PC-3 (cell line): ENCODE measurements at regions of chr20 and their contacts with region 1.

Region 1: GRCh38 chr20:19815553-19815991 is 57.5 kb downstream of the RIN2 start:
- DNase-seq: peak; percentile 99
- ATAC-seq: peak; percentile 88
- H3K4me3 ChIP-seq: no peak overlapping the region
- H3K27ac ChIP-seq: peak overlapping the region; percentile 98
- H3K4me1 ChIP-seq: peaks cover 50% of the 10 kb centered on the region
- H3K27me3 ChIP-seq: no peaks in the 10 kb centered on the region
- CTCF ChIP-seq: no peak

Region 2: DNA sequence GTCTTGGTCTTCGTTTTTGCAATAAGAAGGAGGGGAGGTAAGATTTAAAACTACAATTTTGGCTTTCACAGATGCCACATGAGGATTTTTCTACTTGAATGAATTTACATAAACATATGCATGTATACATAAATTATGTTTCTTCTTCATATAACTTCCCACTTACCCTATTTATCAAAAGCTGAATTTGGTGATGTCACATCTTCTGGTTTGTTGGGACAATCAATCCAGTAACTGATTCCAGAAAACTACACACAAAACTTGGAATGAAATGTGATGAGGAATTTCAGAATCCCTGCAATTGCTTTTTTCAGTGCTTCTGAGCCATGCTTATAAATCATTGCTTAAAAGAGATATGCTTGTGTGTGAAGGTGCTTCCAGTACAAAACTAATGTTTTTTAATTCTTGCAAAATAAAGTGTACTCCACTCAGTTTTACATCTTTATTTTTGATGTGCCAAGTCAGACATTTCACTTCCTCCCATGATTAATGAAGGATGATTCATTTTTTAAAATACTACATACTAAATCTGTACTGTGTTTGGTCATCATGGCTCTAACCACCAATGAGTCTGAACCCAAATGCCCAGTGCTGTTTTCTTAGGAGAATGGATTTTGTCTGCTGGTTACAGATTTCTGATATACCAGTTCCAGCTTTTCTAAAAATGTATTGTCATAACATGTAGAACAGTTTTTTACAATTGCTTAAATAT is 89.6 kb before region 1 on chr20:
- CTCF ChIA-PET with region 1: no interaction called
- POLR2A ChIA-PET with region 1: no interaction called
- intact Hi-C with region 1: no loop called
- DNase-seq: peak; percentile 59
- ATAC-seq: peak; percentile 95
- H3K4me3 ChIP-seq: no peak overlapping the region
- H3K27ac ChIP-seq: no peak overlapping the region
- H3K4me1 ChIP-seq: peaks cover 11% of the 10 kb centered on the region
- H3K27me3 ChIP-seq: no peaks in the 10 kb centered on the region
- CTCF ChIP-seq: no peak

Region 3: GRCh38 chr20:19757487-19758132 is 58.0 kb before region 1 on chr20:
- CTCF ChIA-PET with region 1: no interaction called
- POLR2A ChIA-PET with region 1: interaction called, 11 read pairs
- intact Hi-C with region 1: no loop called
- DNase-seq: peak; percentile 96
- ATAC-seq: peak; percentile 77
- H3K4me3 ChIP-seq: peak overlapping the region; percentile 89
- H3K27ac ChIP-seq: peak overlapping the region; percentile 87
- H3K4me1 ChIP-seq: peaks cover 32% of the 10 kb centered on the region
- H3K27me3 ChIP-seq: no peaks in the 10 kb centered on the region
- CTCF ChIP-seq: no peak

Region 4: GRCh38 chr20:19858466-19859371 is 43.1 kb after region 1 on chr20:
- CTCF ChIA-PET with region 1: no interaction called
- POLR2A ChIA-PET with region 1: no interaction called
- intact Hi-C with region 1: loop called (anchors 5 kb)
- DNase-seq: peak; percentile 38
- ATAC-seq: no peak; the same call in 1 of the 2 replicates
- H3K4me3 ChIP-seq: no peak overlapping the region
- H3K27ac ChIP-seq: peak overlapping the region; percentile 24; the same call in 1 of the 2 replicates
- H3K4me1 ChIP-seq: peaks cover 16% of the 10 kb centered on the region
- H3K27me3 ChIP-seq: no peaks in the 10 kb centered on the region
- CTCF ChIP-seq: no peak

Region 5: DNA sequence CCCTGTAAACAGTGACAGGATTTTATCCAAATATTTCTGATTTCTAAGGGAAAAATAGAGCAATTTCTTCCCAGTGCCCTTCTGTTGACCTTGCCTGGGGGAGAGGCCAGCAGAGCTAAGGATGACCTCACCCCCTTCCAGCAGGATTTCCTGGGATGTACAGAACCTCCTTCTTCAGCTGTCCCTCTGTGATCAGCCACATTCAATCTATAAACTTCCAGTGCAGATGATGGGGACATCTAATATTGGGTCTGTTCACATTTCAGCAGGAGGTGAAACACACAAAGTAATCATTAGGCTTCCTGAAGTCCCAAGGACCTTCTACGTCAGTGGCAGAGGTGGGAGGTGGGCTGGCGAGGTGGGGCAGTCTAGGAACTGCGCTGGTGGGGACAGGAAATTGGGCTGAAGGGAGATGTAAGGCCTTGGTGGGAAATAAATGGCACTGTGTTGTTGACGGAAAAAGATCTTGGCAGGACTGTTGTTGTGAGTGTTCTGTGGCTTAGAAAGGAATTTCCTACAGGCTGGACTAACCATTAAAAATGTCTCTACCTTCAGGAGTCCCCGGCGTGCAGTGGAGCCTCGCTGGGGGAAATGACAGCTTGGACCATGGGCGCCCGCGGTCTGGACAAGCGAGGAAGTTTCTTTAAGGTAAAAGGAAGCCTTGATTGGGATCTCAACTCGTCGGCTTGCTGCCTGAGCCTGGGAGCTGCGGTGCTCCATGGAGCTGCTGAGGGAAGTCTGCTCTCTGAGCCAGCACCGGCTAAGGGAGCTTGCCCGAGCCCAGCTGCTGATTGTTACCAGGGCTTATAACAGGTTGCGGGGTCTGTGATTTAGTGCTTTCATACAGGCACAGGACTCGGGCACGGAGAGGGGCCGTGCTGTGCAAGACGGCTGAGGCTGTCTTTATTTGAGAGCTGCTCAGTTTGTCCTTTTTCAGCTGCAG is 73.7 kb after region 1 on chr20:
- CTCF ChIA-PET with region 1: no interaction called
- POLR2A ChIA-PET with region 1: interaction called, 3 read pairs
- intact Hi-C with region 1: loop called (anchors 1 kb)
- DNase-seq: peak; percentile 52
- ATAC-seq: peak; percentile 29
- H3K4me3 ChIP-seq: peak overlapping the region; percentile 60
- H3K27ac ChIP-seq: peak overlapping the region; percentile 91
- H3K4me1 ChIP-seq: peaks cover 66% of the 10 kb centered on the region
- H3K27me3 ChIP-seq: no peaks in the 10 kb centered on the region
- CTCF ChIP-seq: no peak

Region 6: DNA sequence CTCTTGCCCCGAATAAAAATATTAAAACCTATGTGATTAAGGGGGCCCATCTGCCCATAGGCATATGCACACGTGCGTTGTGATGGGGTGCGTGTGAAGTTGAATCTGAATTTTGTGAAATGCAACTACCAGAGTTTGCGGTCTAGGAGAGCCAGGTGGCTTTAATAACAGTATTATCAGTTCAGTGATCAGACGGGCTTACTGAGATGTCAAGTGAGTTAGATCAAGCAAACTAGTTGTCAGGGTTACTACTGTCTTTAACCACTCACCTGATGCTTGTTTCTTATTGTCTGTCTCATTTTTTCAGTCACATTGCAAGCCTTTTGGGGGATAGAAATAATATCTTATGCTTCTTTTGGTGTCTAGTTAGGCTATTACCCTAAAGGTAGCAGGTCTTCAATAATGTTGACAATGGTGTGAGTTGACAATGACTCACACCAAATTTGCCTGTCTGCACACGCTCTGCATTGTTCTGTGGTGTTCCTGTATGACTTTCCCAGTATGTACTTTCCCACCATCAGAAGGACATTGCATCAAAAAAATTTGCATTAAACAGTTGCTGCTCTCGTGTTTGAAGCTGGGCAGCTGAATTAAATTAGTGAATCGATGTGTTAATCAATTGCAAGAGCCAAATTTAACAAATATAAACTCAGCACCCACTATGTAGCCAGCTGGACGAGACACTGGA is 98.5 kb after region 1 on chr20:
- CTCF ChIA-PET with region 1: no interaction called
- POLR2A ChIA-PET with region 1: no interaction called
- intact Hi-C with region 1: no loop called
- DNase-seq: peak; percentile 92
- ATAC-seq: peak; percentile 100
- H3K4me3 ChIP-seq: no peak overlapping the region
- H3K27ac ChIP-seq: peak overlapping the region; percentile 77
- H3K4me1 ChIP-seq: peaks cover 23% of the 10 kb centered on the region
- H3K27me3 ChIP-seq: no peaks in the 10 kb centered on the region
- CTCF ChIP-seq: no peak

Region 7: GRCh38 chr20:19974626-19975435 is 159.3 kb after region 1 on chr20:
- CTCF ChIA-PET with region 1: interaction called, 5 read pairs
- POLR2A ChIA-PET with region 1: no interaction called
- intact Hi-C with region 1: loop called (anchors 5 kb)
- DNase-seq: peak; percentile 87
- ATAC-seq: peak; percentile 56
- H3K4me3 ChIP-seq: peak overlapping the region; percentile 87
- H3K27ac ChIP-seq: peak overlapping the region; percentile 93
- H3K4me1 ChIP-seq: peaks cover 42% of the 10 kb centered on the region
- H3K27me3 ChIP-seq: no peaks in the 10 kb centered on the region
- CTCF ChIP-seq: no peak